ENCODE measurements at regions of chr12 and their contacts with region 1.

Region 1: GRCh38 chr12:123540899-123541662 is 7.6 kb upstream of the RILPL1 start:
- DNase-seq: no peak

Region 2: DNA sequence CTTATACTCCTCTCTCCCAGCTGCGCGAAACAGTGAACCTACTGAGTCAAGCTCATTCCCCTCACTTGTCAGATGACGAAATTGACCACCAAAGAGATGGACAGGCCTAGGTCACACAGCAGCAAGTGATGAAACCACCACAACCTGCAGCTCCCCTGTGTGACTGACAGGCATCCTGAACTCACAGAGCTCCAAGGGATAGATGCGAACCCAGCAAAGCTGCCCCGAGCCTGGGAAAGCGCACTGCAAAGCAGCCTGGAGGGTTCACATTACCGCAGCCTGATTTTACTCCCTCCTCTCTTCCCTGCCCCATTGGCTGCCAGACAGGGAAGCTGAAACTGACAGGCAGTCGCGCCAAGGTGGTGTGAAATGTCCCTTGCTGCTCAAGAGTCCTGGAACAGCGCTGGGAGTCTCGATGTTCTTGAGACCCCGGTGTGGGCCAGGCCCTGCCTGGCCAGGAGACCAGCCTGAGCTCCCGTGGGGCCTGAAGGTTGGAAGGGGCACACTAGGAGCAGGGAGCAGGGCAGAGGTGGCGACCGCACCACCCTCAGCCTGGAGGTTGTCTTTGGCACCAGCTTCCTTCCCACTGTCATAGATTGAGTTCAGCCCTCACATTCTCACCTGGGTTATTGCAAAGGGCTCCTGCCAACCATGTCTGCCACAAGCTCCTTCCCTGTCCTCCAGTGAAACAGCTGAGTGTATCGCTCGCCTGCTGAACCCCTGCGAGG is 46.8 kb before region 1 on chr12:
- intact Hi-C with region 1: loop called in 1 of 2 experiments (anchors 1 kb)
- DNase-seq: no peak